Activated CD4-positive, alpha-beta T cell treated with anti-CD3 and anti-CD28 coated beads, Interleukin-2, amount 10 ng/mL, durations not matched to agents 24 days and 14 days (primary cell): ENCODE measurements at regions of chr3 and their contacts with region 1.

Region 1: GRCh38 chr3:10738688-10739372 is 77.2 kb upstream of the SLC6A11 start:
- DNase-seq: peak; percentile 93
- H3K4me3 Mint-ChIP-seq: peak overlapping the region; percentile 9
- H3K27ac Mint-ChIP-seq: no peak overlapping the region
- H3K4me1 Mint-ChIP-seq: peaks cover 9% of the 10 kb centered on the region
- H3K27me3 Mint-ChIP-seq: peaks cover 21% of the 10 kb centered on the region

Region 2: GRCh38 chr3:10344147-10344943 is 394.5 kb before region 1 on chr3:
- intact Hi-C with region 1: loop called (anchors 2 kb)
- DNase-seq: peak; percentile 85
- H3K4me3 Mint-ChIP-seq: no peak overlapping the region
- H3K27ac Mint-ChIP-seq: no peak overlapping the region
- H3K4me1 Mint-ChIP-seq: peaks cover 2% of the 10 kb centered on the region
- H3K27me3 Mint-ChIP-seq: no peaks in the 10 kb centered on the region

Region 3: GRCh38 chr3:10417849-10418248 is 321.0 kb before region 1 on chr3:
- intact Hi-C with region 1: loop called (anchors 1 kb)
- DNase-seq: peak; percentile 64
- H3K4me3 Mint-ChIP-seq: no peak overlapping the region
- H3K27ac Mint-ChIP-seq: no peak overlapping the region
- H3K4me1 Mint-ChIP-seq: peaks cover 3% of the 10 kb centered on the region
- H3K27me3 Mint-ChIP-seq: peaks cover 9% of the 10 kb centered on the region

Region 4: DNA sequence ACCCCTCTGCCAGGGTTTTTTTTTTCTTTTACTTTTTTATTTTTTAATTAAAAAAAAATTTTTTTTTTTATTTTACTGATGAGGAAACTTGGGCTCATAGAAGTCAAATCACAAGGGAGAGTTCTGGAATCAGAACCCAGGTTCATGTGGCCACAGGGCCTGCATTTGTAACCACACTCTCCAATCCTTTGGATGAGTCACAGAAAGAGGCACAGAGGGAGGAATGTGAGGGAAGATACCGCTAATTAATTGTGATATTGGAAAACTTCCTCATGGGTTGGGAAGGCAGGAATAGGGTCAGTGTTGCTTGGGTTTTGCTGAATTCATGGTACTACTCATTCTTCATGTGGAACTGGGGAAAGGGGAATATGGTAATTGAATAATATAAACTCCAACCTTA is 55.7 kb before region 1 on chr3:
- intact Hi-C with region 1: no loop called
- DNase-seq: no peak
- H3K4me3 Mint-ChIP-seq: no peak overlapping the region
- H3K27ac Mint-ChIP-seq: no peak overlapping the region
- H3K4me1 Mint-ChIP-seq: no peaks in the 10 kb centered on the region
- H3K27me3 Mint-ChIP-seq: peaks cover 2% of the 10 kb centered on the region

Region 5: GRCh38 chr3:10822708-10823515 is 84.1 kb after region 1 on chr3:
- intact Hi-C with region 1: no loop called
- DNase-seq: no peak
- H3K4me3 Mint-ChIP-seq: no peak overlapping the region
- H3K27ac Mint-ChIP-seq: no peak overlapping the region
- H3K4me1 Mint-ChIP-seq: no peaks in the 10 kb centered on the region
- H3K27me3 Mint-ChIP-seq: peaks cover 22% of the 10 kb centered on the region